H1 (cell line): ENCODE measurements at regions of chr16 and their contacts with region 1.

Region 1: GRCh38 chr16:6682142-6682811 is 650.4 kb upstream of the RBFOX1 start:
- DNase-seq: peak; percentile 53 to 85
- H3K4me3 ChIP-seq: no peak overlapping the region
- H3K27ac ChIP-seq: no peak overlapping the region
- H3K4me1 ChIP-seq: peaks cover 0 to 2% (median 0%) of the 10 kb centered on the region in 4 experiments; a peak in 1 of 7 replicates
- H3K27me3 ChIP-seq: no peaks in the 10 kb centered on the region
- CTCF ChIP-seq: peak; percentile 78 to 90 (median 83)
- EP300 ChIP-seq: no peak
- POLR2A ChIP-seq: no peak
- RAD21 ChIP-seq: peak; percentile 41 to 52

Region 2: DNA sequence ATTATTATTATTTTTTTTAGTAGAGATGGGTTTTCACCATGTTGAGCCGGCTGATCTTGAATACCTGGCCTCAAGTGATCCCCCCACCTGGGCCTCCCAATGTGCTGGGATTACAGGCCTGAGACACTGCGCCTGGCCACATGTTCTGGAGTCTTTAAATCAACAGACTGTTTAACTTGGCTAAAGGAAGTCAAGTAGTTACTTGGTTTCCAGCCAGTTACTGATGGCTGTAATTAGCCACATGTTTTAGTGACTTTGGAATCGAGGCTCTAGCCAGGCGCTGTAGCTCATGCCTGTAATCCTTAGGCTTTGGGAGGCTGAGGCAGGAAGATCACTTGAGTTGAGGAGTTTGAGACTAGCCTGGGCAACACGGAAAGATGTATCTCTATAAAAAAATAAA is 48.8 kb before region 1 on chr16:
- CTCF ChIA-PET with region 1: no interaction called
- POLR2A ChIA-PET with region 1: no interaction called
- DNase-seq: no peak
- H3K4me3 ChIP-seq: no peak overlapping the region
- H3K27ac ChIP-seq: no peak overlapping the region
- H3K4me1 ChIP-seq: no peaks in the 10 kb centered on the region
- H3K27me3 ChIP-seq: no peaks in the 10 kb centered on the region
- CTCF ChIP-seq: no peak
- EP300 ChIP-seq: no peak
- POLR2A ChIP-seq: no peak
- RAD21 ChIP-seq: no peak

Region 3: DNA sequence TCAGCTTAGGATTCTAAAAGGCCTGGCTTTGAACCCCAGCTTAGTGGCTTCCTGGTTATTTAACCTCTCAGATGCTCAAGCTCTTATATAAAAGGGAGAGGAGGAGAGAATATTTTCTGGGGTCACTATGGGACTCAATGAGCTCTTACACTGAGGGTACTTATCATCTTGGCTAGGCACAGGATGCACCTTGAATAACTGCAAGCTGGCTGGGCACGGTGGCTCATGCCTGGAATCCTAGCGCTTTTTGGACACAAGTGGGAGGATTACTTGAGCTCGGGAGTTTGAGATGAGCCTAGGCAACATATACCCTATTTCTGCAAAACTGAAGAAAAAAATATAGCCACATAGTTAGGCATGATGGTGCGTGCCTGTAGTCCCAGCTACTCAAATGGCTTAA is 14.9 kb before region 1 on chr16:
- CTCF ChIA-PET with region 1: interaction called, 35 read pairs
- POLR2A ChIA-PET with region 1: no interaction called
- DNase-seq: no peak
- H3K4me3 ChIP-seq: no peak overlapping the region
- H3K27ac ChIP-seq: no peak overlapping the region
- H3K4me1 ChIP-seq: peaks cover 0 to 11% (median 7%) of the 10 kb centered on the region in 4 experiments; a peak in 3 of 7 replicates
- H3K27me3 ChIP-seq: no peaks in the 10 kb centered on the region; a peak in 1 of 7 replicates
- CTCF ChIP-seq: no peak
- EP300 ChIP-seq: no peak
- POLR2A ChIP-seq: no peak
- RAD21 ChIP-seq: no peak

Region 4: GRCh38 chr16:6698548-6698947 is 16.3 kb after region 1 on chr16:
- CTCF ChIA-PET with region 1: interaction called, 40 read pairs
- POLR2A ChIA-PET with region 1: no interaction called
- DNase-seq: no peak
- H3K4me3 ChIP-seq: no peak overlapping the region
- H3K27ac ChIP-seq: no peak overlapping the region
- H3K4me1 ChIP-seq: no peaks in the 10 kb centered on the region
- H3K27me3 ChIP-seq: no peaks in the 10 kb centered on the region
- CTCF ChIP-seq: no peak
- EP300 ChIP-seq: no peak
- POLR2A ChIP-seq: no peak
- RAD21 ChIP-seq: no peak

Region 5: GRCh38 chr16:6704306-6704930 is 22.1 kb after region 1 on chr16:
- CTCF ChIA-PET with region 1: interaction called, 40 read pairs
- POLR2A ChIA-PET with region 1: no interaction called
- DNase-seq: no peak
- H3K4me3 ChIP-seq: no peak overlapping the region
- H3K27ac ChIP-seq: no peak overlapping the region
- H3K4me1 ChIP-seq: peaks cover 0 to 3% (median 0%) of the 10 kb centered on the region in 4 experiments; a peak in 2 of 7 replicates
- H3K27me3 ChIP-seq: no peaks in the 10 kb centered on the region
- CTCF ChIP-seq: no peak
- EP300 ChIP-seq: no peak
- POLR2A ChIP-seq: no peak
- RAD21 ChIP-seq: no peak

Region 6: GRCh38 chr16:7025616-7026190 is 343.4 kb after region 1 on chr16:
- CTCF ChIA-PET with region 1: interaction called, 10 read pairs
- POLR2A ChIA-PET with region 1: no interaction called
- DNase-seq: peak; percentile 72 to 94
- H3K4me3 ChIP-seq: no peak overlapping the region
- H3K27ac ChIP-seq: no peak overlapping the region; the same call in 1 of the 2 replicates
- H3K4me1 ChIP-seq: peaks cover 0 to 5% (median 2%) of the 10 kb centered on the region in 4 experiments; a peak in 4 of 7 replicates
- H3K27me3 ChIP-seq: no peaks in the 10 kb centered on the region
- CTCF ChIP-seq: peak; percentile 79 to 89 (median 81)
- EP300 ChIP-seq: no peak
- POLR2A ChIP-seq: no peak
- RAD21 ChIP-seq: peak; percentile 87 to 92

Region 7: DNA sequence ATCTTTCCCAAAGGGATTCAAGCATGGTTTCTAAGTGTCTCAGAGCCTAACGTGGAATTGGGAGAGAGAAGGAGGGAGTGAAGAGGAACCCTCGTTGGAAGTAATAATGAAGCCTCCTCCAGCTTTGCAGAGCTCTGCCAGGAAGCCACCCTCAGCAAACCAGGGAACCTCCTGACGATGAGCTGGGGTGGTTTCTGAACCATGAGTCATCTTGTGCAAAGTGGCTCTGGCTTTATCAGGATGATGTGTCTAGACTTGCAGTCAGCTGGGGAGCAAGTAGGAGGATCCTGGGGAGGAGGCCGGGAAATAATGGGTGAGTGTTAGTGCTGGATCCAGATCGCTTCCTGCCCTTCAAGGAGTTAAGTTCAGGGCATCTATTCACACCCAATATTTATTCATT is 458.6 kb after region 1 on chr16:
- CTCF ChIA-PET with region 1: interaction called, 11 read pairs
- POLR2A ChIA-PET with region 1: no interaction called
- DNase-seq: peak in 1 of 2 experiments; percentile 1
- H3K4me3 ChIP-seq: no peak overlapping the region
- H3K27ac ChIP-seq: no peak overlapping the region
- H3K4me1 ChIP-seq: no peaks in the 10 kb centered on the region
- H3K27me3 ChIP-seq: no peaks in the 10 kb centered on the region
- CTCF ChIP-seq: no peak
- EP300 ChIP-seq: no peak
- POLR2A ChIP-seq: no peak
- RAD21 ChIP-seq: no peak